ENCODE measurements at regions of chr1 and their contacts with region 1.

Region 1: DNA sequence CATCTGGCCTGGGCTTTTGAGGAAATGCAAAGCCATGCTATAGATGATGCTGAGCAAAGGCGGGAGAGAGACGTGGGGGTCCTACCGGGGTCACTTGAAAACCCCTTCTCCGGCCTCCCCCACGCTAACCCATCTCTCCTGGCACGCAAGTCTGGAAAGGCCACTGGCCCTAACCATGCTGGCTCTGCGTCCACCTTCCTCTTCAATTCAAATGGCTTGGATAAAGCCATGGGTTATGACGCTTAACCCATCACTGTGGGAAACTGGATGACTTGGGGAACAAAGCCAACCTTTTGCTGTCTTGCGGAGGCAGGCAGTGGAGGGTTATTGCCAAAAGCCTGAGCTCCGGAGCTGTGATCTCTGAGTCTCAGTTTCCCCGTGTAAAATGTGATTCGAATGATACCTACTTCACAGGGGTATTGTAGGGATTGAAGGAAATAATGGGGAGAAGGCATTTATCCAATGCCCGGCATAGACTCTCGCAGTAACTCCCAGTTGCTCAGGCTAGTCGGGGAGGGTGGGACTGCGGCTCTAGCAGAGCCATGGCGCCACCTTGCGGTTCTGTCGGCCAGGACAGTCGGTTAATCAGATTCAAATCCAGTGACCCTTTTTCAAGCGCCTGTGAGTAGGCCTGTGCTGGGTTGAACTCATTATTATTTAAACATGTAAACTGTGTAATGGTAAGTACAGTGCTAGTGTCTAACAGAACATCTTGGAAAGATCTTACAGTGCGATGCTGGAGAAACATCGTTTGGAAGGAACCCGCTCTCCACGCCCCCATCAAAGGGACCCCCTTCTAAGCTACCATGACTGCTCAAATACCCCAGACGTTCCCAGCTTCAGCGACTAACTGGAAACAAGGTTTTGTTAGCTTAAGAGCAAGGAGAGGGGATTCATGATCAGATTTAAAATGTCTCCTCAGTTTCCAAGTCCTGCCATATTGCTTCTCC is 20.3 kb downstream of the NEK2 start:
- DNase-seq: peak; percentile 74
- H3K4me3 ChIP-seq: no peak overlapping the region
- H3K27ac ChIP-seq: peak overlapping the region; percentile 11
- H3K27me3 ChIP-seq: no peaks in the 10 kb centered on the region
- CTCF ChIP-seq: peak; percentile 95

Region 2: DNA sequence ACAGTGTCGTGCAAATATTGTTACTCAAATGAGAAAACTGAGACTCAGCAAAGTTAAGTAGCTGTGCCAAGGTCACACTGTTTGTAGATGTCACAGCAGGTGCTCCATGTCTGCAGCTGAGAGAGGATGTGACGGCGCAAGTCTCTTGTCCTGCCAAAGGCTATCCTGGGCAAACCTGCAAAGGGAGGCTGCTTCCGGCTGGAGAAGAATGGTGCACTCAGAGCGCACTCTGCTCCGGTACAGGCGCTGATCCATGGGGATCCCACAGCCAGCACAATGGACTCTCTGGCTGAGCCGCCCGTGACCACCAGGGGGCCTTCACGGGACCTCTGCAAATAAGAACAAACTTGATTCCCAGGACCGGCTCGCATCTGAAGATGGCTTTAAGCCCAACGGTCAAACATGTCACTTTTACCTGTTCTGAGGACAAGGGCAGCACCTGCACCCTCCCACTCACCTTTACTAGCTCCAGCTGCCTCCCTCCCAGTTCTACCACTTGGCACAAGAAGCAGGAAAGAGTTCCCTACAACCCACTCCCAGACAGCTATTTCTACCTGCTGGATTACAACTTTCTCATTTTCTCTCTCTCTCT is 185.1 kb before region 1 on chr1:
- CTCF ChIA-PET with region 1: interaction called, 38 read pairs
- POLR2A ChIA-PET with region 1: no interaction called
- DNase-seq: peak; percentile 21
- H3K4me3 ChIP-seq: no peak overlapping the region
- H3K27ac ChIP-seq: no peak overlapping the region
- H3K27me3 ChIP-seq: peaks cover 24% of the 10 kb centered on the region
- CTCF ChIP-seq: peak; percentile 93

Region 3: GRCh38 chr1:211571998-211572397 is 83.1 kb before region 1 on chr1:
- CTCF ChIA-PET with region 1: interaction called, 11 read pairs
- POLR2A ChIA-PET with region 1: no interaction called
- DNase-seq: no peak
- H3K4me3 ChIP-seq: no peak overlapping the region
- H3K27ac ChIP-seq: no peak overlapping the region
- H3K27me3 ChIP-seq: no peaks in the 10 kb centered on the region
- CTCF ChIP-seq: no peak

Region 4: GRCh38 chr1:211578640-211579433 is 76.3 kb before region 1 on chr1 and contains the start of gene SLC30A1:
- CTCF ChIA-PET with region 1: interaction called, 10 read pairs
- POLR2A ChIA-PET with region 1: no interaction called
- DNase-seq: peak; percentile 97
- H3K4me3 ChIP-seq: peak within 1 kb of the TSS; percentile 87
- H3K27ac ChIP-seq: peak within 1 kb of the TSS; percentile 55
- H3K27me3 ChIP-seq: no peaks in the 10 kb centered on the region
- CTCF ChIP-seq: no peak
- polyA plus RNA-seq, gene SLC30A1: 11.1 and 12.8 TPM in 2 replicates